Activated T-helper 2 cell treated with anti-CD3 and anti-CD28 coated beads, Interferon-gamma antibody, Interleukin-2, Interleukin-4, amounts not matched to agents 10 μg/mL and 5 μg/mL and 100 μg/mL, durations not matched to agents 14 hours and 24 hours and 36 hours (primary cell): ENCODE measurements at regions of chr19 and their contacts with region 1.

Region 1: DNA sequence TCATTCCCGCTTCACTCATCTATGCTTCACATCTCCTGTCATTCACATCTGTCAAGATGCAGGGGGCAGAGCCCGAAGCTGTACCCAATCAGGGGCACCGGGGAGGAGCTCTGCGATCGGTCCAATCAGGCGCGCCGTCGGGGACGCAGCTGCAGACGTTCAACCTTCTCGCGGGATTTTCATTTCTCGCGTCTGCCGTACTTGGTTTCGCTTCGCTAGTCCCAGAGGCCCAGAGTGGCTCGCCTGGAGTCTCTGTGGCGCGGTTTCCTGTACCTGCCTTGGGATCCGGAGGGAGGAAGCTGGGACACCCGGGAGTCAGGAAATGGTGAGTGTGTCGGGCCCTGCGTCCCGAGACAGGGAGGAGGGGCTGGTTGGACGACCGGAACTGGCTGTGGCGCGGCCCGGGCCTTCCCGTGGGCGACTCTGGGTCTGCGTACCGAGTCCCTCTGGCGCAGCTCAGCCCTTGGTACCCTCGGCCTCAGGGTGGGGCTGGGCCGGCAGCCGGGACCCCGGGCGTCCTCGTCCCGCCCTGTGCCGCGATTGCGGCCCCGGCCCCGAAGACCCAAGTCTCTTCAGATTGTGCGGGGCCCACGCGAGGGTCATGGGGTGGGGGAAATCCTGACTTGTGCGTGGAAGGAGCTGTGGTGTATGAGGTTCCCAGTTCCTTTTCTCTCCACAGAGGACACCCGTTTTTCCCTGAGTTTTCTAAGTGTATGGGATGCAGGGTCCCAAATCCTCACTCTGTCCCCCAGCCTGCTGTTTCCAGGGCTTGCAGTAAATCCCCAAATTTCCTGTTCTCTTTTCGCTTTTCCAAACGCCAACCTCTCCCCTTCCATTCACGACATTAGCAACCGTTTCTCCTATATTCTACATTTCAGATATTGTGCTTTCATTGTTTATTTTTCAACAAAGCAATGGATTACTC is at the start of gene ZNF136:
- DNase-seq: peak; percentile 93
- H3K4me3 Mint-ChIP-seq: peak within 1 kb of the TSS; percentile 100
- H3K27ac Mint-ChIP-seq: peak within 1 kb of the TSS; percentile 94
- H3K4me1 Mint-ChIP-seq: peaks cover 24% of the 10 kb centered on the region
- H3K27me3 Mint-ChIP-seq: no peaks in the 10 kb centered on the region
- total RNA-seq, gene ZNF136: 7.7 and 9.7 TPM in 2 replicates

Region 2: DNA sequence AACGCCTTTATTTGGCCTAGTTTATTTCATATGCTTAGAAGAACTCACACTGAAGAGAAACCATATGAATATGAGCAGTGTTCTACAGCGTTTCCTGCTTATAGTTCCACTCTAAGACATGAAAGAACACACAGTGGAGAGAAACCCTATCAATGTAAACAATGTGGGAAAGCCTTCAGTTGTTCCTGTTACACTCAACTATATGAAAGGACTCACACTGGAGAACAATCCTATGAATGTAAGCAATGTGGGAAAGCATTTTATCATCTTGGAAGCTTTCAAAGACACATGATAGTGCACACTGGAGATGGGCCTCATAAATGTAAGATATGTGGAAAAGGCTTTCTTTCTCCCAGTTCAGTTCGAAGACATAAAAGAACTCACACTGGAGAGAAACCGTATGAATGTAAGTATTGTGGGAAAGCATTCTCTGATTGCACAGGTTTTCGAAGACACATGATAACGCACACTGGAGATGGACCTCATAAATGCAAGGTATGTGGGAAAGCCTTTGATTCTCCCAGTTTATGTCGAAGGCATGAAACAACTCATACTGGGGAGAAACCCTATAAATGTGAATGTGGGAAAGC is 382.6 kb before region 1 on chr19:
- intact Hi-C with region 1: no loop called
- DNase-seq: no peak
- H3K4me3 Mint-ChIP-seq: no peak overlapping the region
- H3K27ac Mint-ChIP-seq: no peak overlapping the region
- H3K4me1 Mint-ChIP-seq: no peaks in the 10 kb centered on the region
- H3K27me3 Mint-ChIP-seq: no peaks in the 10 kb centered on the region

Region 3: GRCh38 chr19:11964858-11965645 is 198.1 kb before region 1 on chr19 and contains the start of gene ZNF763:
- intact Hi-C with region 1: no loop called
- DNase-seq: peak; percentile 80
- H3K4me3 Mint-ChIP-seq: peak within 1 kb of the TSS; percentile 83
- H3K27ac Mint-ChIP-seq: peak within 1 kb of the TSS; percentile 82
- H3K4me1 Mint-ChIP-seq: peaks cover 17% of the 10 kb centered on the region
- H3K27me3 Mint-ChIP-seq: no peaks in the 10 kb centered on the region
- total RNA-seq, gene ZNF763: 0.43 and 0.74 TPM in 2 replicates

Region 4: DNA sequence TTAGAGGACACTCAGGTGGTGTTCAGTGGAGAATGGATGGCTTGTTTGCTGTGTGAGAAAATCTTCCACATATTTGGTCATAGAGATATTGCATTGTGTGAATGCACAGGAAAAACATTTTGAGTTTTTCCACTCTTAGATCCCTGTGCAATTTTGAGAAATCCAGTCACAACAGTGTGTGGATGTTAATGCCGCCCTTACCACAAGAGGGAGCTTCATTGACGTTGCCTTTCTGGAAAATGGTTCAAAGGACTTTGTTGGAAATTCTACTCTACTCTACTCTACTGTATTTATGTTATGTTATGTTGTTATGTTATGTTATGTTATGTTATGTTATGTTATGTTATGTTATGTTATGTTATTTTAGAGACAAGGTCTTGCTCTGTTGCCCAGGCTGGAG is 36.4 kb before region 1 on chr19:
- intact Hi-C with region 1: no loop called
- DNase-seq: no peak
- H3K4me3 Mint-ChIP-seq: no peak overlapping the region
- H3K27ac Mint-ChIP-seq: no peak overlapping the region
- H3K4me1 Mint-ChIP-seq: no peaks in the 10 kb centered on the region
- H3K27me3 Mint-ChIP-seq: no peaks in the 10 kb centered on the region

Region 5: DNA sequence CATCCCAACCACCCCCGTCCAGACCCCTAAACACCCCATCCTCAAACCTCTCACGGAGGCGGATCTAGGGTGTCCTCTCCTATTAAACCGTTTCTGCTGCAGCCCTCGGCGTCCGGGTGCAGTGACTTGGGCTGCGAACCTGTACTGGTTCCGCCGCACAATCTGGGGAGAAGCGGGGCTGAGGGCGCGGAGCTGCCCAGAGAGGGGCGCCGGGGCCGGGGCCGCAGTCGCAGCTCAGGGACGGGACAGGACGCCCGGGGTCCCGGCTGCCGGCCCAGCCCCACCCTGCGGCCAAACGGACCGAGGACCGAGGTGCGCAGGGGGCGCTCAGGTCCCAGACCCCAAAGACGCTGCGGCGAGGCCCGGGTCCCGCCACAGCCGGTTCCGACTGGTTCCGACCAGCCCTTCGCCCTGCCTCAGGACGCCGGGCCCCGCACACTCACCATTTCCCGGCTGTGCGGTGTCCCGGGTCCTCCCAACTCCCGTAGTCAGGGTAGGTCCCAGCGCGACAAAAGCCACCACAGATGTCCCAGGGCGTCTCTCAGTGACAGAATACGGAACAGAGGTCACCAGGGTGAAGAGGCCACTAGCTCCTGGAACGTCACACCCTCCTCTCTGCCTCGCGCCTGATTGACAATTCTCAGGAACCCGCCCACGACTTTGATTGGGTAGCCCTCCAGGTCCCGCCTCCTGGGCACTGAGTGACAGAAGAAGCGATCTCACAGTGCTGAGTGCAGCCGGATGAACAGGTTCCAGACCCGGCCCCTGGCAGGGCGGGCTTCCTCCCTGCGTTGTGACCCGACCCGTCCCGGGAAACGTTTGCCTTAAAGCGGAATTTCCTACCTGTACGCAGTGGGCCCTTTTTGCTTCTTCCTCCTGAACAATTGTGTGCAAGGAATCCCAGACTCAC is 131.4 kb after region 1 on chr19 and contains the start of gene ZNF44:
- intact Hi-C with region 1: loop called (anchors 2 kb)
- DNase-seq: peak; percentile 96
- H3K4me3 Mint-ChIP-seq: peak within 1 kb of the TSS; percentile 100
- H3K27ac Mint-ChIP-seq: peak within 1 kb of the TSS; percentile 99
- H3K4me1 Mint-ChIP-seq: peaks cover 22% of the 10 kb centered on the region
- H3K27me3 Mint-ChIP-seq: no peaks in the 10 kb centered on the region
- total RNA-seq, gene ZNF44: 8.6 and 8.7 TPM in 2 replicates